ENCODE measurements at regions of chr2 and their contacts with region 1.

Region 1: DNA sequence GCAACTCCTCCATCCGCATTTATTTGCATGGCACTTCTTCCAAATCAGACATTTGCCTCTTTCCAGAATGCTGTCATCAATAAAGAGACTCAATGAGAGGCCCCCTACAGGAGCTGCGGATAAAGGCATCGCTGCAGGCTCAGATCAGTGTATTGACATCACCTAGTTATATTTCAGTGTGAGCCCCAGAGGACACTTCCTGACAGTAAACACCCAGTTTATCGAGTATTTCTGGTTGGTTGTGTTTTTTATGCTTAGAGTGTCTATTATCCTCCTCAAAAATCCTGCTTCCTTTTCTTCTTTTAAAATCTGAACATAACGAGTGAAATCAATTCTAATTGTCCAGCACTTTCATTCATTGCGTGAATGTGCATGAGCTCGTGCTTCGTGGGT is 38.8 kb downstream of the NRP2 start:
- DNase-seq: no peak
- H3K4me3 ChIP-seq: peak overlapping the region in 2 of 4 experiments; percentile 14 to 20; a peak in 2 of 8 replicates
- H3K27ac ChIP-seq: peak overlapping the region; percentile 54; the same call in 1 of the 2 replicates
- H3K4me1 ChIP-seq: peaks cover 12 to 24% (median 21%) of the 10 kb centered on the region in 4 experiments
- H3K27me3 ChIP-seq: no peaks in the 10 kb centered on the region
- CTCF ChIP-seq: peak; percentile 6 to 60 (median 53)
- EP300 ChIP-seq: no peak
- POLR2A ChIP-seq: no peak
- RAD21 ChIP-seq: peak in 1 of 2 experiments; percentile 31; a peak in 2 of 4 replicates

Region 2: DNA sequence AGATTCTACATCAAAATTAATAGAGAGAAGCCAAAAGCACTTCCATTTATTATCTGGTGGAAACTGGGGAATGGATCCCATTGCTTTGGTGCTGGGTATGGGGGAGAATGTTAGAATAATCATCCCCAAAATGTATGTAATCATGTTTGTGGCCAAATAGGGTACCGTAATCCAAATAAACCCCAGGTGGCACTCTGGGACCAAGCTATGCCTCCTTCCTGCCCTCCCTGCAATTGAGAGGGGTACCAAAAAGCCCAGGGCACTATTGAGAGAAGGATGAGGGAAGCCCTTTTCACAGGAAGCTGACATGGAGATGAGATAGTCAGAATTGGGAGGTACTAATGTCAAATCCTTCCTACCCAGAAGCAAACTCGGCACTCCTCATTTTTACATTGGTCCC is 124.5 kb before region 1 on chr2:
- CTCF ChIA-PET with region 1: no interaction called
- POLR2A ChIA-PET with region 1: no interaction called
- DNase-seq: no peak
- H3K4me3 ChIP-seq: no peak overlapping the region
- H3K27ac ChIP-seq: no peak overlapping the region
- H3K4me1 ChIP-seq: no peaks in the 10 kb centered on the region
- H3K27me3 ChIP-seq: no peaks in the 10 kb centered on the region
- CTCF ChIP-seq: peak in 2 of 3 experiments; percentile 9 to 11; a peak in 1 of 4 replicates
- EP300 ChIP-seq: no peak
- POLR2A ChIP-seq: no peak
- RAD21 ChIP-seq: peak; percentile 51 to 65

Region 3: GRCh38 chr2:205685314-205686055 is 35.6 kb before region 1 on chr2:
- CTCF ChIA-PET with region 1: interaction called, 21 read pairs
- POLR2A ChIA-PET with region 1: interaction called, 11 read pairs
- DNase-seq: peak in 1 of 2 experiments; percentile 78
- H3K4me3 ChIP-seq: peak overlapping the region; percentile 57 to 77 (median 62)
- H3K27ac ChIP-seq: no peak overlapping the region
- H3K4me1 ChIP-seq: peaks cover 14 to 25% (median 17%) of the 10 kb centered on the region in 4 experiments
- H3K27me3 ChIP-seq: peaks cover 4 to 47% (median 34%) of the 10 kb centered on the region in 4 experiments; a peak in 6 of 7 replicates
- CTCF ChIP-seq: peak in 1 of 3 experiments; percentile 9; a peak in 1 of 4 replicates
- EP300 ChIP-seq: no peak
- POLR2A ChIP-seq: peak in 1 of 2 experiments; percentile 68; a peak in 1 of 3 replicates
- RAD21 ChIP-seq: no peak; a peak in 1 of 4 replicates

Region 4: GRCh38 chr2:205734436-205735037 is 13.5 kb after region 1 on chr2:
- CTCF ChIA-PET with region 1: interaction called, 82 read pairs
- POLR2A ChIA-PET with region 1: interaction called, 7 read pairs
- DNase-seq: no peak
- H3K4me3 ChIP-seq: no peak overlapping the region
- H3K27ac ChIP-seq: 0 out of 2 replicates have a peak overlapping the region, but pooled peaks have one; percentile 44
- H3K4me1 ChIP-seq: peaks cover 4 to 35% (median 20%) of the 10 kb centered on the region in 4 experiments
- H3K27me3 ChIP-seq: no peaks in the 10 kb centered on the region
- CTCF ChIP-seq: no peak
- EP300 ChIP-seq: no peak
- POLR2A ChIP-seq: no peak
- RAD21 ChIP-seq: no peak

Region 5: GRCh38 chr2:205754924-205755321 is 33.9 kb after region 1 on chr2:
- CTCF ChIA-PET with region 1: interaction called, 12 read pairs
- POLR2A ChIA-PET with region 1: interaction called, 3 read pairs
- DNase-seq: no peak
- H3K4me3 ChIP-seq: no peak overlapping the region
- H3K27ac ChIP-seq: no peak overlapping the region
- H3K4me1 ChIP-seq: peaks cover 0 to 2% (median 0%) of the 10 kb centered on the region in 4 experiments; a peak in 1 of 7 replicates
- H3K27me3 ChIP-seq: no peaks in the 10 kb centered on the region
- CTCF ChIP-seq: no peak
- EP300 ChIP-seq: no peak
- POLR2A ChIP-seq: no peak
- RAD21 ChIP-seq: no peak

Region 6: GRCh38 chr2:205885492-205886099 is 164.5 kb after region 1 on chr2:
- CTCF ChIA-PET with region 1: interaction called, 10 read pairs
- POLR2A ChIA-PET with region 1: no interaction called
- DNase-seq: peak; percentile 82 to 98
- H3K4me3 ChIP-seq: no peak overlapping the region
- H3K27ac ChIP-seq: no peak overlapping the region
- H3K4me1 ChIP-seq: peaks cover 0 to 5% (median 0%) of the 10 kb centered on the region in 4 experiments; a peak in 2 of 7 replicates
- H3K27me3 ChIP-seq: no peaks in the 10 kb centered on the region
- CTCF ChIP-seq: peak; percentile 85 to 99 (median 94)
- EP300 ChIP-seq: no peak
- POLR2A ChIP-seq: no peak
- RAD21 ChIP-seq: peak; percentile 98 to 99